ENCODE measurements at regions of chr11 and their contacts with region 1.

Region 1: DNA sequence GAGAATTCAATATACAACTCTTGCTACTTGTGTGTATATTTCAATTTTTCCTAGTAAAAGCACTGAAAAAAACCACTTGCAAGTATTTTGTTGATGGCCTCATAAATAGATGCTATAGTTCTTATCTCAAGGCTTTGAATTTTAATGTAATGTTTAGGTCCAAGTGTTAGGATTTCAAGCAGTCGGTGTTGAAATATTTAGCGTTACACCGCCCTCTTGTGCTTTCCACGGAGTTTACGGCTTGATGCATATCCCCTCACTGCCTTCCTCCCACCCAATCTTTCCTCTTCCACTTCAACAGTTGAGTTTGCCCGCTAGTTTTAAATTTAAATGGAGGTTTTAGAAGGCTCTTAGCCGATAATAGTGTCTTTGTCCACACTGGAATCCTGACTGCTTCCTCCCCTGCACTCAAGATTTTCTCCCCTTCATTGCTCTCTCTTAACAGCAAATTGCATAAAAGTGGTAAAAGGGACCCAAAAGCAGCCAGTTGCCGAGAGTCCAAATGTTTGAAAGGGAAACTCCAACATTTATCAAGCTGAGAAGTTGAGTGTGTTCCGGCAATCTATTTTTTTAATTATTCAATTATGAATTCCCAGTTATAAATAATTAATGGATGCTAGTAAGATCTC is 25.9 kb upstream of the HTATIP2 start:
- DNase-seq: peak; percentile 47
- ATAC-seq: peak; percentile 75
- H3K4me3 ChIP-seq: no peak overlapping the region
- H3K27ac ChIP-seq: no peak overlapping the region
- H3K4me1 ChIP-seq: no peaks in the 10 kb centered on the region
- H3K27me3 ChIP-seq: peaks cover 84% of the 10 kb centered on the region
- CTCF ChIP-seq: peak; percentile 68

Region 2: DNA sequence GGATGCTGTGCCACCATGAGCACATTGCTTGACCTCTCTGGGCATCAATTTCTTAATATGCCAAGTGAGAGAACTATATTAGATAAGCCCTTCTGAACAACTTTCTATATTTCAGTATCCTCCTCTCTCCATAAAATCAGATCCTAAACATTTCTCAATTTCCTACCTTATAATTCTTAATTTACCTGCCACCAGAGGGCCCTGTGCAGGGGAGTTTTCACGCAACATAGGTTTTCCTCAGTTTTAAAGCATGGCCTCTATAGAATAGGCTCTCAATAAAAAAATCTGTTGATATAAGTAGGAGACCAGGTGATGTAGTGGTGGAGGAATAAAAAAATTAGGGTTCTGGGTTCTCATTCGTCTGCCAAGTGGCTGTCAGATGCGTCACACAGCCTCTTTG is 93.7 kb before region 1 on chr11:
- CTCF ChIA-PET with region 1: no interaction called
- POLR2A ChIA-PET with region 1: no interaction called
- intact Hi-C with region 1: loop called (anchors 1 kb)
- DNase-seq: peak; percentile 39
- ATAC-seq: peak; percentile 51
- H3K4me3 ChIP-seq: no peak overlapping the region
- H3K27ac ChIP-seq: no peak overlapping the region
- H3K4me1 ChIP-seq: no peaks in the 10 kb centered on the region
- H3K27me3 ChIP-seq: peaks cover 42% of the 10 kb centered on the region
- CTCF ChIP-seq: peak; percentile 66

Measured in PC-3 (cell line).